ENCODE measurements at regions of chr11 and their contacts with region 1.

Region 1: DNA sequence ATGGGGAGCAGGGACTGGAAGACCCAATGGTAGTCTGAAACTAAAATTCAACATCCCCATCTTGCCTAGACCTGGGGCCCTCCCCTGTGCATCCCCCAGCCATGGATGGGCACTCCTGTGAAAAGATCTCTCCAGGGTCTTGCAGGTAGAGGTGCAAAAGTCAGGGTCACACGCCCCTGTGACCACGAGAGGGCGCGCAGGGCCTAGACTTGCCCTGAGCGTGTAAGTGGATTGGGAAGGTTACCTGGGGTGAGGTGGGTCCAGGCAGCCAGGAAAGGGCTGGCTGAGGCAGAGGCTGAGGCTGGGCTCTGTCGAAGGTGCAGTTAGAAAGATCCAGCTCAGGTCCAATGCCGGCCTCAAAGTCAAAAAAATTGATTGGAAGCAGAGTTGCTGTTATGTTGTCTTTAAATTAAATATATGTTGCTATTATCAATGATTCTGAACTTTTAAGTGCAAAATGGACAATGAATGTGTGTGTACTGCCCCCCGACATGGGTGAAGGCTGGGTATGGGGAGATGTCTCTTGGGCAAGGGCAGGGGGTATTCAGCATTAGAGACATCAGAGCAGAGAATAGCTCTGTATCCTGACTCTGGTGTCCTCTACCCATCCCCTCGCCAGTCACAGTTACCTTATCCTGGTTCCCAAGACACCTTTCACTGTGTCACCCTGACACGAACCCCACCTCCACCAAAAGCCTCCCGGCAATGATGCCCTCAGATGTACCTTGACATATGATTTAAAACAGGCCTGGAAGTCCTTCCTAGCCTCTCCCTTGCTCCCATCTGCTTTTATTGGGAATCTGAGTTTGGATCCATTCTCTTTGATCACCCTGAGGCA is 4.7 kb upstream of the POU2F3 start:
- DNase-seq: peak; percentile 72
- H3K4me3 ChIP-seq: no peak overlapping the region
- H3K27ac ChIP-seq: no peak overlapping the region
- H3K4me1 ChIP-seq: peaks cover 0 to 11% (median 6%) of the 10 kb centered on the region in 4 donors
- H3K27me3 ChIP-seq: peaks cover 15% of the 10 kb centered on the region
- CTCF ChIP-seq: peak; percentile 67 to 81 (median 70)
- EP300 ChIP-seq: no peak
- POLR2A ChIP-seq: no peak

Region 2: GRCh38 chr11:120295084-120295483 is 59.8 kb after region 1 on chr11:
- in situ Hi-C with region 1: loop called in 3 of 4 experiments (anchors 10 kb)
- intact Hi-C with region 1: no loop called
- DNase-seq: peak; percentile 23
- H3K4me3 ChIP-seq: no peak overlapping the region
- H3K27ac ChIP-seq: no peak overlapping the region
- H3K4me1 ChIP-seq: peaks cover 0 to 11% (median 1%) of the 10 kb centered on the region in 4 donors
- H3K27me3 ChIP-seq: peaks cover 8% of the 10 kb centered on the region
- CTCF ChIP-seq: no peak
- EP300 ChIP-seq: no peak
- POLR2A ChIP-seq: no peak

Region 3: DNA sequence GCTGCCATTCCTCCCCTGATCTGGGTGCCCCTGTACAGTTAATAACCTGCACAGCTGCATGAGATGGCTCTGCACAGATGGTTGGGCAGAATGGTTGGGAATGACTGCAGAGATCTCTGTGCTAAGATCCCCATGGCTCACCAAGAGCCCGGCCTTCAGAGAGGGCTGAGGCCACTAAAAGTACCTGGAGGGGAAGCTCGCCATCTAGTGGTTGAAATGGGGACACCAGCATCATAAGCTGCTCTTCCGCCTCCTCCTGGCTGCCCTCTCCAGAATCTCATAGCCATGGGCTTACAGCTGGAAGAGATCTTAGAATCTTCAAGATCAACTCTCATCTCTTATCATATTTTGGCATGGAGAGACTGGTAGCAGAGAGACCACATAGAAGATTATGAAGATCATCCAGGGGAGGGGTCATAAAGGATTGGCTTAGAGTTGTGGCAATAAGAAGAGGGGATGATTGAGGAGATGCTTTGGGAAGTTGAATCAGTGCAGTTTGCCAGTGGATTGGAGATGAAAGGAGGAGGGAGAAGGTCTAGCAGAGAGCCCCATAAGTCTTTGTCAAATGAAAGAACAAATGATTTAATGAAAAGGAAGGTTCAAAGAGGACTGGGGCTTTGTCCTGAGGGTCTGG is 67.9 kb after region 1 on chr11:
- in situ Hi-C with region 1: loop called in 3 of 4 experiments (anchors 10 kb)
- intact Hi-C with region 1: no loop called
- DNase-seq: peak; percentile 81
- H3K4me3 ChIP-seq: no peak overlapping the region
- H3K27ac ChIP-seq: peak overlapping the region in 2 of 4 donors; percentile 19 to 23
- H3K4me1 ChIP-seq: peaks cover 0 to 26% (median 14%) of the 10 kb centered on the region in 4 donors
- H3K27me3 ChIP-seq: no peaks in the 10 kb centered on the region
- CTCF ChIP-seq: peak; percentile 81 to 90 (median 88)
- EP300 ChIP-seq: no peak
- POLR2A ChIP-seq: no peak